ENCODE measurements at regions of chr2 and their contacts with region 1.

Region 1: DNA sequence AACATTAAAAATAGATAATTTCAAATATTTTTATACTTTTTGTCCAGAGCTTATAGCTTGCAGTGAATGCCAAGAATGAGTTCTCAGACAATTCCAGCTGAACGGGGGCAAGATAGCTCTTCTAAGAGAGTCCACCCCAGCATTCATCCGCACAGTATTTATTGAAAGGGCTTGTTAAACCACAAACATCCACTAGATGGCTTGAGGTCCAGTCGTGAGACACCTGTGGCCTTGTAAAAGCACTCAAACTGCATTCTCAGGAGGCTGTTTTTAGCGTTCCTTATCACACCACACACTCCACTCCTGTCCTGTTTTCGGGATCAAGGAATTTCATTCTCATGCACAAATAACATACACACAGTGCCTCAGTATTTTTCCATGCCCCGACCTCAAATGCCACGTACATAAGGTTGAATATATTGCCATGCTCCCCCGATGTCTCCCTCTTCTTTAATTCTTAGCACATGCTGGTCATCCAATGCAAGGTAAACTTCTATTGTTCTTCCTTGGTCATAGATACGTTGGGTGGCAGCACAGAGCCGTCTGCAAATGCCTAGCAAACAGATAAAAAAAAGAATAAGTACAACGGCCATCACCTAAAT is 47.4 kb downstream of the DNAJC10 start:
- DNase-seq: peak in 1 of 2 experiments; percentile 59
- H3K4me3 ChIP-seq: no peak overlapping the region
- H3K4me3 Mint-ChIP-seq: no peak overlapping the region
- H3K27ac Mint-ChIP-seq: no peak overlapping the region
- H3K4me1 ChIP-seq: no peaks in the 10 kb centered on the region
- H3K4me1 Mint-ChIP-seq: no peaks in the 10 kb centered on the region
- H3K27me3 ChIP-seq: no peaks in the 10 kb centered on the region
- H3K27me3 Mint-ChIP-seq: no peaks in the 10 kb centered on the region
- CTCF ChIP-seq: peak; percentile 64 to 71

Region 2: DNA sequence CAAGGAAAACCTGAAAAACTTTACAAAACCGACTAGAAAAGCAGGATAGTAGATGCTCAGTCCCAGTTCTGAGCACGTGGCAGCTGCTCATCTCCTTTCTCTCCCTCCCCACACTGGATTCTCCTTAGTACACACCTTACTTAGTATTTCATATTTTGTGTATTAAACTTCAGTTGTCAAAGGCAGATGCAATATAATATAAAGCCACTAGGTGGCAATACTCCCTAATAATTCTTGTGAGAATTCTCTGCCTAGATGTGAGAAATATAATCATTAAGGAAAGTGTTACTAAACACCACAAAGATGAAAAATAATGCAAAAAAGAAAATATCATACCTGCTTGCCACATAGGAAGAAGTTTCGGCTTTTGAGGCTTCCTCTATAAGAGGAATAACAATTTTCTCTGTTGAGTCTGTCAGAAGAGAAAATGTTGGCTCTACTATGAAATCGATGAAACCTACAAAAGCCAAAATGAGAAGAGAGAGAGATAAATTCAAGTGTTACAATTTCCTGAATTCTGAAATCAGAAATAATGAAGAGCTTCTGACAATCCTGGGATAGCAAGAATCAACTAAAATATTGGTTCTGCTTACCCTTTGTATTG is 577.2 kb before region 1 on chr2:
- CTCF ChIA-PET with region 1: no interaction called
- POLR2A ChIA-PET with region 1: no interaction called
- intact Hi-C with region 1: loop called (anchors 1 kb)
- DNase-seq: peak in 1 of 2 experiments; percentile 52
- H3K4me3 ChIP-seq: no peak overlapping the region
- H3K4me3 Mint-ChIP-seq: no peak overlapping the region
- H3K27ac Mint-ChIP-seq: no peak overlapping the region
- H3K4me1 ChIP-seq: no peaks in the 10 kb centered on the region
- H3K4me1 Mint-ChIP-seq: no peaks in the 10 kb centered on the region
- H3K27me3 ChIP-seq: no peaks in the 10 kb centered on the region
- H3K27me3 Mint-ChIP-seq: no peaks in the 10 kb centered on the region
- CTCF ChIP-seq: peak; percentile 46 to 68

Measured in Caco-2 (cell line).